KBM-7 (cell line): ENCODE measurements at regions of chr4 and their contacts with region 1.

Region 1: GRCh38 chr4:158020176-158020575 is 152.6 kb downstream of the GASK1B start:
- DNase-seq: no peak

Region 2: DNA sequence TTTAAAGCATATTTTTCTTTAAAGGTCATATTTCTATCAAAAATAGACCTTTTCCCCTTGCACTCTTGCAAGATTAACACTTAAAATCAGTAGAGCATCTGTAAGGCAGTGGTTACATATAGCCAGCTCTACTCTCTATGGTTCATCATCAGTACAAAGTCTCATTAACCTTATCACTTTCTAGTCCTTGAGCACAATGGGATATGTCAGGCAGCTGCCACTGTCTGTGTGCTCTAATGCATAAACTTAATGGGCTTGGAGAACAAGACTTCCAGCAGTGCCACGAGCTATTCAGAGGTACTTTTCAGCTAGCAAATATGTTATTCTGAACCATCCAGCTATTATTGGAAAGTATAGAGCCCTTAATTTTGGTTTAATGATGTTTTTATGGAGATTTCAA is 241.1 kb before region 1 on chr4:
- in situ Hi-C with region 1: no loop called
- DNase-seq: no peak

Region 3: GRCh38 chr4:158172261-158173258 is 152.4 kb after region 1 on chr4 and contains the start of gene GASK1B:
- in situ Hi-C with region 1: loop called (anchors 25 kb)
- DNase-seq: peak; percentile 68

Region 4: DNA sequence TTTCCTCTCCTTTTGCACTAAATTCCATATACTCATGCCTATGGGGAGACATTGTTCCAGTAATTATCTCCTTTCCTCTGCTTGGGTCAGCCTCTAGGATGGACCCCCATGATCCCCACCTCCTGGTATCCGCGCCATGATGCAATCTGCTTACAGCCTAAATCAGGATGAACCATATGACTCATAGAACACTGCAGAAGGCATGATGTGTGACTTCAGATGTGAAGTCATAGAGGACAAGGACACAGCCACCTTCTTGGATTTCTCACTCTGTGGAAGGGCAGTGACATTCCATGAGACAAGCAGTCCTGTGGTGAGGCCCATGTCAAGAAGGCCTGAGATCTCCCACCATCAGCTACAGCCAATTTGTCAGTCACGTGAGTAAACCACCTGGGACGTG is 181.1 kb after region 1 on chr4:
- in situ Hi-C with region 1: no loop called
- DNase-seq: no peak